ENCODE measurements at regions of chr4 and their contacts with region 1.

Region 1: DNA sequence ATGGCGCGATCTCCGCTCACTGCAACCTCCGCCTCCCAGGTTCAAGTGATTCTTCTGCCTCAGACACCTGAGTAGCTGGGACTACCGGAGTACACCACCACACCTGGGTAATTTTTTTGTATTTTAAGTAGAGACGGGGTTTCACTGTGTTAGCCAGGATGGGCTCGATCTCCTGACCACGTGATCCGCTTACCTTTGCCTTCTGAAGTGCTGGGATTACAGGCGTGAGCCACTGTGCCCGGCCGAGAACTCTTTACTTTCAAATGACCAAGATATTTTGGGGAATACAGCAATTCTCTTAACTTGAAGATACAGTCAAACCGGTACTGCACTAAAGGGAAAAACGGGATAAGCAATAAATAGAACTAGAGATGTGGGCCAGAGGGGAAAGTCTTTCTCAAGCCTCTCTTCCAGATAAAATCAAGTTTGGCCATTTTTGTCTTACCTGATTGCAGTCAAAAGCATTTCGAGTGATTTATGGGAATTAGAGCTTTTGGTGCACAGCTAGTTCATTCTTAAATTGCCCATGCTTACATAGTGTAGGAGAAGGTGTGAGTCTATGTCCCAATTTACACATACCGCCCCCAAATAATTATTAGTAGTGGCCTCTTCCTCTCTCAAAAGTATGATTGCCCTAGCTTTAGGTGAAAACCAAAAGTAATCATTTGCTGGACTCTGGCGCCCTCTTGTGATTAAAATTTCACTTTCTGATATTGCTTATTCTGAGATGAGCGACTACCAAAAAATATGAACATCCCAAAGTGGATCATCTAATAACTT is 53.2 kb upstream of the ABCG2 start:
- DNase-seq: no peak
- ATAC-seq: peak; percentile 59 to 82

Region 2: DNA sequence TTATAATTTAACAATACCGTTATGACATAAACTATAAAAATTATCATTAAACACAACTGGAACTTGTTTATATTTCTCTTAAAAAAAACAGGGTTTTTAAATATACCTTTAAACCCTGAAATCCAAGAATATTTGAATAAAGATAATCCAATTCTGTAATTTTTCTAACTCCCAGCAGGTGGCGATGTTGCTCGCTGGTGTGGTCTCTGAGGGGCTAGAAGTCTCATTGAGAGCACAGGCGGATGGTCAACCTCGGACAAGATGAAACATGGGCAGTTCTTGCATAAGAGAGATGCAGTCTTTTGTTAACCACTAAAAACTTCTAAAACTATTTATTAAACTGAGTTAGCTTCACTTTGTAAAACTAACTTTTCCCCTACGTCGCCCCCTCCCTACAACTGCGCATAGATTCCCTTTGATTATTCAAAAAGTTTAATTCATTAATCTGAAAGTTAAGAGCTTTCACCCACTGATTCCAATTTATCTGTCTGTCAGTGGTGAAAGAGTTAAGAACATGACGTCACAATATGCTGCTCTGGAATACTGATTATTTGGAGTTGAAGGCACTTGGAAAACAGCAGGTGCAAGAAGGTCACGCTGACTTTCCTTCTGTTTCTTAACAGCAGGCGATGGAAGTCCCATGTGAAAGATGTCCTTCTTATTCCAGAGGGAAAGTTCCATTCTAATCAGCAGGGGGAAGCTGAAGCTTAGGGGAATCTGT is 532.1 kb before region 1 on chr4:
- intact Hi-C with region 1: loop called in 1 of 2 experiments (anchors 5 kb)
- DNase-seq: peak; percentile 60
- ATAC-seq: peak; percentile 78 to 81

Region 3: DNA sequence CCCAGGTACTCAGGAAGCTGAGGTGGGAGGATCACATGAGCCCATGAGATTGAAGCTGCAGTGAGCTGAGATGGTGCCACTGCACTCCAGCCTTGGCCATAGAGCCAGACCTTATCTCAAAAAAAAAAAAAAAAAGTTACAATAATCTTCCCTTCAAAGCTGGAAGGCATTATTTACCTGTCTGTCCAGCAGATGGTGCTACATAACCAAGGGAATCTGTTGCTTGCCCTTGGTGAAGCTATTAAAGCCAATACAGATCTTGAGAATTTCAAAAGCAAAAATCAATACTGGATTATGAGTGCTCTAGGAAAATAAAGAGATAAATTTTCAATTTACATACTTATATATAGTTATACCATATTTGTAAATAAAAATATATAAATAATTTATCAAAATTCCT is 178.4 kb before region 1 on chr4:
- intact Hi-C with region 1: loop called (anchors 5 kb)
- DNase-seq: no peak
- ATAC-seq: peak in 1 of 2 donors; percentile 51

Region 4: DNA sequence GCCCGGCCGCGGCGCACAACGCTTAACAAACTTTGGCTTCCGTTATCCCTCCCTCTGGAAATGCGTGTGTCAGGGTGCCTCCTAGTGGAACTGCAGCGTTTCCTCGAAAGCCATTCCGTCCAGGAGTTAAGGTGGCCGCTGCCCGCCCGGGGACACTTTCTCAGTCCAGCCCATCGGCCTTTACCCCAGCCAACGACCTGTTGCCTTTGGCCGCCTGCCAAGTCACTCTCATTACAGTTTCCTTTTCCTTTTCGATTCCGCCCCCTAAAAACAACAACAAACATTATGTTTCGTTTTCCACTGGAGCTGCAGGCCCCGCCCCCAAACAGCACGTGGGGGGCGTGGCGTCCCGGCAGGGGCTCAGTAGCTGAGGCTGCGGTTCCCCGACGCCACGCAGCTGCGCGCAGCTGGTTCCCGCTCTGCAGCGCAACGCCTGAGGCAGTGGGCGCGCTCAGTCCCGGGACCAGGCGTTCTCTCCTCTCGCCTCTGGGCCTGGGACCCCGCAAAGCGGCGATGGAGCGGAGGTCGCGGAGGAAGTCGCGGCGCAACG is 245.2 kb after region 1 on chr4 and contains the start of gene HERC5:
- intact Hi-C with region 1: loop called in 1 of 2 experiments (anchors 5 kb)
- DNase-seq: peak; percentile 96
- ATAC-seq: peak; percentile 94 to 97
- total RNA-seq, gene HERC5: 2.4 to 3.7 TPM

Measured in left cardiac atrium (tissue), 4 donors.